Left cardiac atrium (tissue), 4 donors: ENCODE measurements at regions of chrX and their contacts with region 1.

Region 1: GRCh38 chrX:8815464-8816065 is 14.4 kb upstream of the FAM9A start:
- DNase-seq: no peak
- ATAC-seq: no peak

Region 2: DNA sequence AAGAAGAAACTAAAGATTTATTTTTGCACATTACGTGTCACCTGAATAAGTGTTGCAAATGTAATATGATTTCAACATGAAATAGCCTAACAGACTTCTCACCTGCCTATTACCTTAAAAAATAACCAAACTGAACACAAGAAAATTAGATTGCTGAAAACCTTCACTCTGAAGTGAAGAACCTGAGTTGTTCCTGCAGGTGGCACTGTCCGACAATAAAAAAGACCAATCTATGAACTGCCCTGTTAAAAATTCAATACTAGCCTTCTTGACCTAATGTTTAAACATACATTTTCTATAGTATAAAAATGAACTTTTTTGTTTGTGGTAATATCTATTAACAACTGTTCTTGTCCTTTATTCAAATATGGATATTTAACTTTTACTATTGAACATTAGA is 819.2 kb before region 1 on chrX:
- intact Hi-C with region 1: loop called in 1 of 2 experiments (anchors 10 kb)
- DNase-seq: no peak
- ATAC-seq: no peak